HEK293 (cell line): ENCODE measurements at regions of chrX and their contacts with region 1.

Region 1: GRCh38 chrX:53081925-53082772 is at the start of gene TSPYL2:
- H3K4me3 ChIP-seq: peak within 1 kb of the TSS; percentile 69
- H3K27ac ChIP-seq: peak within 1 kb of the TSS; percentile 70
- H3K4me1 ChIP-seq: peaks cover 3% of the 10 kb centered on the region; the same call in 1 of the 2 replicates
- CTCF ChIP-seq: 0 out of 2 replicates have a peak, but pooled peaks have one; percentile 42

Region 2: DNA sequence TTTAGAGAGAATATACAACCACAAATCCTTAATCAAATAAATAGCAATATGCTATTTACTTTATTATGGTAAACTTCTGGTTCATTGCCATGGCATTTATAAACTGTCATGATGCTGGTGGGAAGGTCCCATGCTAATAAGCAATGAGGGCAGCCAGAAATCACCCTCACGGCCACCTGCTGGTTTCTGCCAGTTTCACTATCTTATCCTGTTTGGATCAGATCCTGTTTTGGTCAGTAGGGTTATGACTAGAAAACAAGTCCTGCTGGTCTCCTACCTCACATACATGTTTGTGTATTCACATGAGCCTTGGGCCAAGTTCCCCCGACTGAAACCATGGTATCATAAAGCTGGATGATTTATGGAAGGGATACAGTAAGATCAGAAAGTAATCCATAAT is 243.0 kb before region 1 on chrX:
- CTCF ChIA-PET with region 1: no interaction called
- POLR2A ChIA-PET with region 1: no interaction called
- H3K4me3 ChIP-seq: no peak overlapping the region
- H3K27ac ChIP-seq: no peak overlapping the region
- H3K4me1 ChIP-seq: no peaks in the 10 kb centered on the region
- CTCF ChIP-seq: no peak

Region 3: GRCh38 chrX:52852110-52852865 is 229.9 kb before region 1 on chrX:
- CTCF ChIA-PET with region 1: no interaction called
- POLR2A ChIA-PET with region 1: no interaction called
- H3K4me3 ChIP-seq: no peak overlapping the region
- H3K27ac ChIP-seq: no peak overlapping the region
- H3K4me1 ChIP-seq: no peaks in the 10 kb centered on the region
- CTCF ChIP-seq: no peak

Region 4: GRCh38 chrX:52995135-52996020 is 86.8 kb before region 1 on chrX:
- CTCF ChIA-PET with region 1: no interaction called
- POLR2A ChIA-PET with region 1: interaction called, 12 read pairs
- H3K4me3 ChIP-seq: peak overlapping the region; percentile 77
- H3K27ac ChIP-seq: peak overlapping the region; percentile 85
- H3K4me1 ChIP-seq: no peaks in the 10 kb centered on the region
- CTCF ChIP-seq: peak; percentile 89

Region 5: GRCh38 chrX:53071604-53072417 is 10.3 kb before region 1 on chrX:
- CTCF ChIA-PET with region 1: interaction called, 5 read pairs
- POLR2A ChIA-PET with region 1: interaction called, 44 read pairs
- H3K4me3 ChIP-seq: peak overlapping the region; percentile 27
- H3K27ac ChIP-seq: no peak overlapping the region
- H3K4me1 ChIP-seq: no peaks in the 10 kb centered on the region
- CTCF ChIP-seq: peak; percentile 94

Region 6: DNA sequence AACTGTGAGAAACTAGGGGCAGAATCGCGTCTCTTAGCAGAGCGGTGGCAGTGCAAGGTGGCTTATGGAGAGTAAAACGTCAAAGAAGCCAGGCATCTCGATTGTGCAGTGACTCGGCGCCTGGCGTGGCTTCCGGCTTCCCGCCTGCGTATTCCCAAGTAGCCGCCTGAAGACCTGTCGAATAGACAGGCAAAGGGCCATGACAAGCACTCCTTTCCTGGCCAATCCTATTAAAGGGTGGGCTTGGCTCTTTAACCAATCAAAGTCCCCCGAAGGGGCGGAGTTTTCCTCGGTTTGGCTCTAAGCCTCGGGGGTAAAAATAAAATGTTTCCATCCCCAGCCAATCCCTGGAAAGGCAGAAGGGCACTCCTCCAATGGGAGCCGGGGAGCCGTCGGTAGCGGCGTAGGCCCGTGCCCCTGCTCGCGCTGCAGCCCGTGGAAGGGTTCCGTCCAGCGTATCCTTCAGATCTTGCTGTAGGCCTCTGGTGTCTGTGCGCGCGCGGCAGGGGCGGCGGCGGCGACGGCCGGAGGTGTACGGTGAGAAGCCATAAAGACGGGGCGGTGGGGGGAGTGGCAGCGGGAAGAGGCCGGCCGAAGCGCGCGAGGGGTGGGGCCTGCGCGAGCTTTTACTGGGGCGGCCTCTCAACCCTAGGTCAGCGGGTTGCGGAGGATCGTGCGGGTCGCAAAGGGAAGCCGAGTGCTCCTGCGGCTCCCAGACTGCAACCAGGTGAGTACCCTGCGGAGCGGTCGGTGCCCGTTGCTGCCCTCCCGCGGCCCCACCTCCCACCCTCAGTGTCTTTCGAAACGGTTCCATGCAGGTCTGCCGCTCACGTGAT is 11.8 kb after region 1 on chrX and contains the start of gene KANTR:
- CTCF ChIA-PET with region 1: interaction called, 4 read pairs
- POLR2A ChIA-PET with region 1: interaction called, 10 read pairs
- H3K4me3 ChIP-seq: peak within 1 kb of the TSS; percentile 66
- H3K27ac ChIP-seq: peak within 1 kb of the TSS; percentile 68
- H3K4me1 ChIP-seq: no peaks in the 10 kb centered on the region
- CTCF ChIP-seq: peak; percentile 75

Region 7: DNA sequence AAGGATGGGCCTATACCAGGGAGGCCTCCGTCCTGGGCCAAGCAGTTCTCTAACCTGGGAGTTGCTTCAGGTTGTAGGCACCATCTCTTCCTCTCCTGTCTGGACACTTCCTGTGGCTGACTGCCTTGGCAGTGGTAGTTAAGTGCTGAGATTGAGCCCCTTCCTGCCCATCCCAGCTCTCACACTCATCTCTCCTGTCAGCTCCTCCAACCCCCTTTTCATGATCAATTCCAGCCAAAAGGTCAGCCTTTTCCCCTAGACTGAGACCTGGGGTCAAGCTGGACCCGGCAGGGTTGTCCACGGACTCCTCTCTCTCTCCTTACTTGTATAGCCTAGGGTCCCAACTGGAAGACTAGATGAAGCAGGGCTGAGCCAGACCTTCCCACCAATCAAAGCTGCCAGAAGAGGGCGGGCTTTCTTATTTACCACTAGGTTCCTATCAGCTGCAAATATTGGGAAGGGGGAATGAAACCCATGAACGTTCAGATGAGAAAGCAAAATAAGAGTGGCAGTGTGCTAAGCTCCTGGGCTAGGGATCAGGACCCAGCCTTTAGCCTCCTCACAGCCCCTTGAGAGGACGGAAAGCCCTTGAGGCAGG is 108.3 kb after region 1 on chrX:
- CTCF ChIA-PET with region 1: no interaction called
- POLR2A ChIA-PET with region 1: interaction called, 10 read pairs
- H3K4me3 ChIP-seq: no peak overlapping the region
- H3K27ac ChIP-seq: no peak overlapping the region
- H3K4me1 ChIP-seq: no peaks in the 10 kb centered on the region
- CTCF ChIP-seq: no peak

Region 8: GRCh38 chrX:53224860-53225797 is 143.0 kb after region 1 on chrX and contains the start of gene KDM5C:
- CTCF ChIA-PET with region 1: no interaction called
- POLR2A ChIA-PET with region 1: interaction called, 10 read pairs
- H3K4me3 ChIP-seq: peak within 1 kb of the TSS; percentile 90
- H3K27ac ChIP-seq: peak within 1 kb of the TSS; percentile 96
- H3K4me1 ChIP-seq: peaks cover 19% of the 10 kb centered on the region
- CTCF ChIP-seq: peak; percentile 55; the same call in 1 of the 2 replicates